ENCODE measurements at regions of chr19 and their contacts with region 1.

Region 1: DNA sequence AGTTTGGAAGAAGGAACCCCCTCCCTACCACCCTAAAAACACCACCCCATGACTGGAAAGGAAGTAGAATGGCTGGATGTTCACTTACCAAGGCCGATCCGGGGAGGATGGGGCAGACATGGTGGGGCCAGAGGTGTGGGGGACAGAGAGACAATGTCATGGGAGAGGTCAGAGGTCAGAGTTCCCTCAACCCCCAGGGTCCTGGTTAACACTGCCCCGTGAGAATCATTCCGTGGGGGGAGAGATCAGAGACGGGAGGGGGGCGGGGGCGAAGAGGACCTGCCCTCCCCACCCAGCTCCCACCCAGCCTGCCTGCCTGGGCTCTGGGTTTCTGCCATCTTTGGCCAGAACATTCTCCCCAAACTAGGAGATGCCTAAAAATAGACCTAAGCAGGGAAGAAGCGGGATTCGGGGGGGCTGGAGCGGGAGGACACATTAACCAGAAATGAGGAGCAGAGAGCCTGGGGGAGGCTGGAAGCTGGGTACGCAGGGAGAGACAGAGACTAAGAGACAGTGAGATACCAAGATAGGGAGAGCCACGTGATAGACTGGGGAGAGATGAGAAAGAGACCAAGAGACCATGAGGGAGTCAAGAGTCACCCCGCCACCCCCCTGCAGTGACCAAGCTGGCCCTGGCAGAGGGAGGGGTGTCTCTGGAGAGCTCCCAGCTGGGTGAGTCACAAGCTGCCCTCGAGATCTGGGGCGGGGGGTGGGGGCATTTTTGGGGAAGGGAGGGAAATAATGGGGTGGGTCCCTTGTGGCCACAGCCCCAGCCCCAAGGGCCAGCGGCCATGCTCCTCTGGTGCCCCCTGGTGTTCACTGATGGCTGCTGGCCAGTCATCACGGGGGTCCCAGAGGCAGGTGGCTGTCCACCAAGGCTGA is 6.1 kb upstream of the KANK2 start:
- DNase-seq: peak; percentile 88
- ATAC-seq: peak; percentile 78

Region 2: GRCh38 chr19:11019824-11020223 is 183.6 kb before region 1 on chr19:
- intact Hi-C with region 1: loop called (anchors 10 kb)
- DNase-seq: no peak
- ATAC-seq: peak; percentile 14

Region 3: DNA sequence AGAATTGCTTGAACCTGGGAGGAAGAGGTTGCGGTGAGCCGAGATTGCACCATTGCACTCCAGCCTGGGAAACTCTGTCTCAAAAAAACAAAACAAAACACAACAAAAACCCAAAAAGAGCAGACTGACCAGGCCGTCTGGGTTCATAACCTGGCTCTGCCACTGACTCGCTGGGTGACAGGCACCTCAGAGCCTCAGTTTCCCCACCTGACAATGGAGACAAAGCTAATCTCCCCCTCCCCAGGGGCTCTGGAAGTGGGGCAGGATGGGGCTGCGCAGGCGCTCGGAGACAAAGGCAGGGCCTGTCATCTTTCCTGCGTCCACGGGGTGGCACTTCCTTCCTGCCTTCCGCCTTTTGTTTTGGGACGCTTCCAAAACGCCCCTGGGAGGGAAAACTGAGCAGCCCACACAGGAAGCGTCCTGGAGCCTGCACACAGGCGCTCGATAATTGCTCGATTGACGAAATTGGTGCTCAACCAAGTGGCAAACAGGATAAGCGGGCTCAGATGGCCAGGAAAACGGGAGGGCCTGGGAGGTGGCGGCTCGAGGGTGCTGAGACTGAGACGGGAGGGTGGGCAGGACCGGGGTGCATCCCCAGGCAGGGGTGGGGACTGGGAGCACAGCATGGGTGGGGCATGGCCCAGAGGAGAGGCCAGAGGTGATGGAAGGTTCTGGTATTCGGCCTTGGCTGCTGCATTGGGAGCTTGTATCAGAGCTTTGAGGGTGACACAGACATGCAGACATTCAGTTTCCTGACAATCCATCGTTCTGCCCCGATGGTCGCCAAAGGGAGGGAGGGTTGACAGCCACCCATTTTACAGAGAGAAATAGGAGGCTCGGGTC is 65.7 kb before region 1 on chr19:
- intact Hi-C with region 1: loop called (anchors 5 kb)
- DNase-seq: peak; percentile 92
- ATAC-seq: peak; percentile 79

Measured in sciatic nerve (tissue), 2 donors.